Activated CD4-positive, alpha-beta T cell treated with anti-CD3 and anti-CD28 coated beads for 36 hours (primary cell): ENCODE measurements at regions of chr1 and their contacts with region 1.

Region 1: DNA sequence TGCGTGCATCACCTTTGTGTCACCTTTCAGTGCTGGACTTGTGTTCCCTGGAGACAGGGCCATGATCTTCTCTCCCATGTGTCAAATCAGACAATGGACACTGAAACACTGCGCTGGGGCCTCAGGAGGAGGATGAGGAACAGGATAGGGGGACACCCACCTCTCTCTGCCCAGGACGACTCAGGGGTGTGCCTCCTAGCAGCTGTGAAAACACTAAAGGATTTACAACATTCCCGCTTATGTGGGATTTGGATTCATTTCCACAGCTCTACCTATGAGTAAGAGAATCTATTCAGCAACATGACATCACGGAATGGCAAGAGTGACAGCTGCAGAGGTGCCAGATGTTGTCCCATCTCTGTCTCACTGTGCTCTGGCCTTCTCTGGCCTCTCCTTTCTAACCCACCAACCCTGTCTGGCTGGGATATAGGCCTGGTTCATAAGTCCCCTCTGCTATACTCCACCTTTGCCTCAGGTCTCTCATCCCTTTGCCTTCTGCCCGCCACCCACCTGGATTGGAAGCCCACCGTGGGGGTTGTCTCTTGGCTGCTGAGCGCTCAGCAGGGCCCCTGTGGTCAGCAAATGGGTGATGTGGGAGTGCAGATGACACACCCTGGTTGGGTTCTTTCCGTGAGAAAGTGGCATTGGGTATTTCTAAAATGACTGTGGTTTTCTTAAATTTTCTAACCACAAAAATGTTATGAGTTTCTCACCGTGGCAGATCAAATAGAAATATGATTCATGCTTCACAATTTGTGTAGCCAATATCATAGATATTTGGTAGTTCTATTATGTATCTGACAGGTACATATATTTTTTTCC is 47.1 kb upstream of the TLR5 start:
- DNase-seq: peak; percentile 81
- ATAC-seq: peak; percentile 90
- H3K4me3 Mint-ChIP-seq: peak overlapping the region; percentile 8
- H3K27ac Mint-ChIP-seq: peak overlapping the region; percentile 73
- H3K4me1 Mint-ChIP-seq: peaks cover 40% of the 10 kb centered on the region
- H3K27me3 Mint-ChIP-seq: peaks cover 2% of the 10 kb centered on the region

Region 2: DNA sequence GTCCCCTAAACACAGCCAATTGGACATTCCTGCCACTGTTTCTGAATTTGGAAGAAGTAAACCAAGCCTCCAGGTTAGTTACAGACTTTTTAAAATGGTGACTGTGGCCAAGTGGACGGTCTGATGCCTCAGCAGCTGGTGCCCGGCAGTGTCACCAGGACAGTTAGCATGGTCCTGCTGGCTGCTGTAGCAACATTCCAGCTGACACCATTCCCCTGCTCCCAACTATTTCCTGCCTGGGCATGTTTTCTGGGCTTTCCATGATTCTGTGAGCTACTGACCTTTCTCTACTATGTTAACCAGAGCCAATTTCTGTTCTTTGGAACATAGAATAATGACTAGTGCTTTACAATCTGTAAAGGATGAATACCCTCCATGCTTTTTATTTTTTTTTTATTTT is 142.1 kb before region 1 on chr1:
- CTCF ChIA-PET with region 1: no interaction called
- POLR2A ChIA-PET with region 1: no interaction called
- intact Hi-C with region 1: no loop called
- DNase-seq: no peak
- ATAC-seq: no peak
- H3K4me3 Mint-ChIP-seq: no peak overlapping the region
- H3K27ac Mint-ChIP-seq: no peak overlapping the region
- H3K4me1 Mint-ChIP-seq: no peaks in the 10 kb centered on the region
- H3K27me3 Mint-ChIP-seq: peaks cover 10% of the 10 kb centered on the region

Region 3: GRCh38 chr1:223142795-223143536 is 47.1 kb before region 1 on chr1 and contains the start of gene TLR5:
- CTCF ChIA-PET with region 1: interaction called, 3 read pairs
- POLR2A ChIA-PET with region 1: no interaction called
- intact Hi-C with region 1: loop called (anchors 1 to 2 kb)
- DNase-seq: peak; percentile 93
- ATAC-seq: peak; percentile 89
- H3K4me3 Mint-ChIP-seq: peak within 1 kb of the TSS; percentile 69
- H3K27ac Mint-ChIP-seq: peak within 1 kb of the TSS; percentile 79
- H3K4me1 Mint-ChIP-seq: peaks cover 30% of the 10 kb centered on the region
- H3K27me3 Mint-ChIP-seq: peaks cover 2% of the 10 kb centered on the region
- total RNA-seq, gene TLR5: 0.21 to 0.56 TPM

Region 4: DNA sequence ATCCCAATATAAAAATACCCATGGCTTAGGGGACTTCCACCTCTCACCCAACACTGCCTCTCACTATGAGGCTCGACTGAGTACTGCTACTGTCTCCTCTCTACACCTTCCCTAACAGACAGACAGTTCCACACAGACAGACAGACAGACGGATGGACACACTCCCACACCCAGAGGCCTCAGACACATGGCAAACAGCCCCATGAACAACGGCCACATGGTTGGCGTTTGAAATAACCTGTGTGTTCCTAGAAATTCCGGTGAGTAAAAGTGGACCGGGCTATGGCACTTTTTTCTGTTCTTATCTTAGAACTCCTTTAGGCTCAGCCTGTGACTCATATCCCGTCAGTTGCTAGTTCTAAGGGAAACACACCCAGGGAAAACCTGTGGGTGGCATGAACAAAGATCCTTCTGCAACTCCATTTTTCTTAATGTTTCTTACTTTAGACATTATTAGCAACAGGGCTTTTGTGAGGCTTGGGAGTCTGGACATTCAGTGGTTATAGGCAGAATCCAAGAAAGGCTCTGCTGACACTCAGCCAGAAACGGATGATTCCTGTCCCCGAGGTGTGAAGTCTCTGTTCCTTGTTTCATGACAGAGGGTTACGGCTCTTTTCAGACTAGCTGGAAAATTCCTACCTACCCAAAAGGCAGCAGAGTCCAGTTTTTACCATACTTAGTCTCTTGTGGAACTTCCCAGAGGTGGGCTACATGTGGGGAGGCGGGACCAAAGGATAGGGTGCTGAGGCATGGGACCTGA is 43.5 kb after region 1 on chr1:
- CTCF ChIA-PET with region 1: no interaction called
- POLR2A ChIA-PET with region 1: interaction called, 3 read pairs
- intact Hi-C with region 1: loop called (anchors 1 kb)
- DNase-seq: peak; percentile 44
- ATAC-seq: peak; percentile 56
- H3K4me3 Mint-ChIP-seq: no peak overlapping the region
- H3K27ac Mint-ChIP-seq: peak overlapping the region; percentile 8
- H3K4me1 Mint-ChIP-seq: peaks cover 69% of the 10 kb centered on the region
- H3K27me3 Mint-ChIP-seq: no peaks in the 10 kb centered on the region

Region 5: DNA sequence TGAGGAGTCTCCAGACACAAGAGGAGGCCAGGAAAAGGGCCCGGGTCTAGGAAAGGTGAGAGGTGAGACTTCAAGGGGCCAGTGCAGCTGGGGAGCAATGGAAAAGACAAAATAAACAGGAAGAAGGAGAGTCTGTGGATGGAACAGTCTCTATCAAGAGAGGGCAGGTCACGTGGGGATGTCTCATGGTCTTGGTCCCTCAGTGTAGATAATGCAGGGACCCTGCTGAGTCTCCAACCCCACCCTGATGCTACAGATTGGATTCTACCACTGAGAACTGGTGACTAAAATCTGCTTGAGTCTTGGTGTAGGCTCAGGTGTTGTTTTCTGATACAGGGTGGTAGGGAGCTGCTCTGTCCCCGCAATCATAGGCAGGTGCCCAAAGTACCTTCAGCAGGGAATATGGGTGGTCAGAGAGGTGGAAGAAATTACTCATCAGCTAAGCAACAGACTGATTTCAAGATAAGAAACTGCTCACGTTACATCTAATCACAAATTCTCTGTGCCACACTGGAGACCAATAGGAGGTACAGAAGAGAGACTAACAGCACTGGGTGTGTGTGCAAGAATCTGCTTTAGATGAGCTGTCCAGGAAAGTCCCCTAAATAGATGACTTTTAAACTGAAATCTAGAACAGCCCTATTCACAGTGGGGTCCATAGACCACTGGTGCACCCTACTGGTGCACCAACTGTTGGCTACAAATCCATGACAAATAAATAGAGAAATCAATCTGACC is 54.4 kb after region 1 on chr1:
- CTCF ChIA-PET with region 1: interaction called, 4 read pairs
- POLR2A ChIA-PET with region 1: no interaction called
- intact Hi-C with region 1: loop called in 1 of 2 experiments (anchors 1 kb)
- DNase-seq: peak; percentile 56
- ATAC-seq: peak; percentile 96
- H3K4me3 Mint-ChIP-seq: no peak overlapping the region
- H3K27ac Mint-ChIP-seq: no peak overlapping the region
- H3K4me1 Mint-ChIP-seq: peaks cover 46% of the 10 kb centered on the region
- H3K27me3 Mint-ChIP-seq: no peaks in the 10 kb centered on the region

Region 6: DNA sequence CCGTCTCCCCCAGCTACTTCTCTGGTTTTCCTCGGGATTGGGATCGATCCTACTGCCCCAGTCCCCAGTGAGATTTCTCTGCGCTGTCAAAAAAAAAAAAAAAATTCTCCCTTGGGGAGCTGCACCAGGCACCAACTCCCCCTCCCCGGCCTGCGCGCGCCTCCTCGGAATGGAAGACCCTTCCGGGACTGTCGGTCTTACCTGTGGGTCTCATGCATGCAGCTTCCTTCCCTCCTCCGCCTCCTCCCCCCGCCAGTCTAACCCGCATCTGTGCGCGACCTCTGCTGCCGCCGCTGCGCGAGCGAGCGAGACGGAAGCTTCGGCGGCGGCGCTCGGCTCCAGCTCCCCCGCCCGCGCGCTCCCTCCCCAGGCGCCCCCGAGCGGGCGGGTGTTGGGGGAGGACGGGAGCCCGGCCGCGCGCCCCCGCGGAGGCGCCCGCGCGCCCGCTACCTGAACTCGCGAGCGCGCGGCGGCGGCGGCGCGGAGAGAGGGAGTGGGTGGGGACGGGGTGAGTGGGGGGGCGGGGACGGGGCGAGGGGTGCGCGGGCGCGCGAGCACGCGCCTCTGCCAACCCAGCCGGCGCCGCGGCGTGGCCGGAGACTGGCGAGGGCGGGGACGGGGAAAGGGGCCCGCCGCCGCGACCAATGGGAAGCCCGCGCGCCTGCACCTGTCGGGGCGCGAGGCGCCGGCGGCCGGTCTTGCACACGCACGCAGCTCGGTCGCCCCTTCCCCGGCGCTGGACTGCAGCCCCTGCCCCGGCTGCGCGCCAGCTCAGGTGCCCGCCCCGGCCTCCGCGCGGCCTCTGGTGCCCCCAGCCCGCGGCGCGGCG is 174.0 kb after region 1 on chr1 and contains the start of gene SUSD4:
- CTCF ChIA-PET with region 1: interaction called, 4 read pairs
- POLR2A ChIA-PET with region 1: no interaction called
- intact Hi-C with region 1: loop called in 1 of 2 experiments (anchors 1 kb)
- DNase-seq: peak; percentile 82
- ATAC-seq: peak; percentile 90
- H3K4me3 Mint-ChIP-seq: peak within 1 kb of the TSS; percentile 80
- H3K27ac Mint-ChIP-seq: peak within 1 kb of the TSS; percentile 37
- H3K4me1 Mint-ChIP-seq: peaks cover 18% of the 10 kb centered on the region
- H3K27me3 Mint-ChIP-seq: peaks cover 11% of the 10 kb centered on the region
- total RNA-seq, gene SUSD4: 1.9 to 2.2 TPM

Region 7: GRCh38 chr1:223831755-223832636 is 641.9 kb after region 1 on chr1:
- CTCF ChIA-PET with region 1: no interaction called
- POLR2A ChIA-PET with region 1: no interaction called
- intact Hi-C with region 1: loop called in 1 of 2 experiments (anchors 1 kb)
- DNase-seq: no peak
- ATAC-seq: peak; percentile 71
- H3K4me3 Mint-ChIP-seq: no peak overlapping the region
- H3K27ac Mint-ChIP-seq: no peak overlapping the region
- H3K4me1 Mint-ChIP-seq: peaks cover 29% of the 10 kb centered on the region
- H3K27me3 Mint-ChIP-seq: no peaks in the 10 kb centered on the region